Gastrocnemius medialis (tissue), 4 donors: ENCODE measurements at regions of chr4 and their contacts with region 1.

Region 1: GRCh38 chr4:105715692-105716278 is 7.2 kb downstream of the GSTCD start:
- DNase-seq: no peak
- ATAC-seq: no peak
- H3K4me3 ChIP-seq: peak overlapping the region in 1 of 4 donors; percentile 26
- H3K27ac ChIP-seq: no peak overlapping the region
- H3K4me1 ChIP-seq: peaks cover 13 to 16% of the 10 kb centered on the region in 2 donors
- H3K27me3 ChIP-seq: no peaks in the 10 kb centered on the region
- CTCF ChIP-seq: peak in 4 of 5 experiments; percentile 23 to 59 (median 43)
- POLR2A ChIP-seq: no peak

Region 2: GRCh38 chr4:105520817-105521790 is 194.7 kb before region 1 on chr4:
- in situ Hi-C with region 1: loop called in 2 of 4 experiments (anchors 10 to 25 kb)
- intact Hi-C with region 1: loop called (anchors 5 kb)
- DNase-seq: no peak
- ATAC-seq: no peak
- H3K4me3 ChIP-seq: no peak overlapping the region
- H3K27ac ChIP-seq: no peak overlapping the region
- H3K4me1 ChIP-seq: no peaks in the 10 kb centered on the region
- H3K27me3 ChIP-seq: no peaks in the 10 kb centered on the region
- CTCF ChIP-seq: peak; percentile 4 to 59 (median 29)
- POLR2A ChIP-seq: no peak

Region 3: GRCh38 chr4:105843941-105844340 is 128.2 kb after region 1 on chr4:
- in situ Hi-C with region 1: no loop called
- intact Hi-C with region 1: no loop called
- DNase-seq: no peak
- ATAC-seq: no peak
- H3K4me3 ChIP-seq: no peak overlapping the region
- H3K27ac ChIP-seq: no peak overlapping the region
- H3K4me1 ChIP-seq: peaks cover 0 to 4% of the 10 kb centered on the region in 2 donors
- H3K27me3 ChIP-seq: no peaks in the 10 kb centered on the region
- CTCF ChIP-seq: no peak
- POLR2A ChIP-seq: no peak